Transverse colon (tissue), 4 donors: ENCODE measurements at regions of chr5 and their contacts with region 1.

Region 1: GRCh38 chr5:180090098-180090768 is 18.7 kb upstream of the RNF130 start:
- DNase-seq: peak; percentile 70
- H3K4me3 ChIP-seq: peak overlapping the region; percentile 43 to 59 (median 53)
- H3K27ac ChIP-seq: peak overlapping the region; percentile 68 to 76 (median 74)
- H3K4me1 ChIP-seq: peaks cover 0 to 24% (median 15%) of the 10 kb centered on the region in 4 donors
- H3K27me3 ChIP-seq: no peaks in the 10 kb centered on the region
- CTCF ChIP-seq: peak; percentile 77 to 96 (median 86)
- EP300 ChIP-seq: no peak
- POLR2A ChIP-seq: peak; percentile 16

Region 2: DNA sequence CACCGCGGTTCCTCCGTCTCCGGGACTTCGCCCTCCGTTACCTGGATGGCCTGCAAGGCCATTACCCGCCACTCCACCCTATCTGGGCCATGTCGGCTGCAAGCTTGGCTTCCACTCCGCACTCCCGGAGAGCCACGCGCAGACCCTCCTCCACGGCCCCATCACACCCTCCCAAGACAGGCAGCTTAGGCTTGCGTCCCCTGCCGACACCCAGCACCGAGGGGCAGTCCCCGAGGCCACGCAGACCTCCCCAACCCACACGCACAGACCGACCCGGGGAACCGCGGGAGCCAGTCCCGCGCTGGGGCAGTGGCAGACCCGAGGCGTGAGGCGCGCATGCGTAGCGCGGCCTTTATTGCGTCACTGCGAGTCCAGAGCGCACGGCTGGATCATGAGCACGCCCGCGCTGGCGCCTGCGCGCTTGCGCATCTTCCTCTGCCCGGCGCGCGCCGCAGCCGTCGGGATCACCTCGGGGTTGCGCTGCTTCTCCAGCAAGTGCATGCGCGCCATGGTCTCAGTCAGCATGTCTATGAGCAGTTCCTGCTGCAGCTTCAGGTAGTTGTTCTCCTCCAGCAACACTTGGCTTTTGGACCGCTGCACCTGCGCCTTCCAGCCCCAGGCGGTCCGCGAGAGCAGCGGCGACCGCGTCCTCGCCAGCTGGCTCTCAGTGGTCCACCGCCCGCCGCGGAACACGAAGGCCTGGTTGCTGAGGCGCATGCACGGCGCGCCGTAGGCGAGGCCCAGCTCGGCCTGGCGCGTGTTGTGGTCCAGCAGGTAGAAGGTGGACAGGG is 411.8 kb before region 1 on chr5:
- in situ Hi-C with region 1: no loop called
- intact Hi-C with region 1: no loop called
- DNase-seq: peak; percentile 97
- H3K4me3 ChIP-seq: peak overlapping the region; percentile 57 to 78 (median 60)
- H3K27ac ChIP-seq: peak overlapping the region; percentile 85 to 98 (median 94)
- H3K4me1 ChIP-seq: peaks cover 5 to 26% (median 16%) of the 10 kb centered on the region in 4 donors
- H3K27me3 ChIP-seq: no peaks in the 10 kb centered on the region
- CTCF ChIP-seq: peak in 1 of 5 experiments; percentile 47
- EP300 ChIP-seq: no peak
- POLR2A ChIP-seq: peak; percentile 92

Region 3: GRCh38 chr5:179907570-179908324 is 182.5 kb before region 1 on chr5 and contains the start of gene TBC1D9B:
- in situ Hi-C with region 1: loop called in 1 of 4 experiments (anchors 25 kb)
- intact Hi-C with region 1: no loop called
- DNase-seq: peak; percentile 71
- H3K4me3 ChIP-seq: peak within 1 kb of the TSS; percentile 56 to 81 (median 66)
- H3K27ac ChIP-seq: peak within 1 kb of the TSS; percentile 82 to 88 (median 84)
- H3K4me1 ChIP-seq: peaks cover 14 to 23% (median 20%) of the 10 kb centered on the region in 4 donors
- H3K27me3 ChIP-seq: no peaks in the 10 kb centered on the region
- CTCF ChIP-seq: peak in 4 of 5 experiments; percentile 28 to 49 (median 35)
- EP300 ChIP-seq: no peak
- POLR2A ChIP-seq: no peak
- total RNA-seq, gene TBC1D9B: 90.5 to 178 (median 127) TPM

Region 4: GRCh38 chr5:179974946-179975712 is 115.1 kb before region 1 on chr5:
- in situ Hi-C with region 1: loop called in 1 of 4 experiments (anchors 25 kb)
- intact Hi-C with region 1: loop called (anchors 10 kb)
- DNase-seq: peak; percentile 59
- H3K4me3 ChIP-seq: no peak overlapping the region
- H3K27ac ChIP-seq: no peak overlapping the region
- H3K4me1 ChIP-seq: peaks cover 0 to 6% (median 1%) of the 10 kb centered on the region in 4 donors
- H3K27me3 ChIP-seq: no peaks in the 10 kb centered on the region
- CTCF ChIP-seq: peak; percentile 24 to 55 (median 32)
- EP300 ChIP-seq: no peak
- POLR2A ChIP-seq: no peak

Region 5: GRCh38 chr5:179986328-179986727 is 103.9 kb before region 1 on chr5:
- in situ Hi-C with region 1: loop called in 1 of 4 experiments (anchors 25 kb)
- intact Hi-C with region 1: loop called (anchors 10 kb)
- DNase-seq: no peak
- H3K4me3 ChIP-seq: no peak overlapping the region
- H3K27ac ChIP-seq: no peak overlapping the region
- H3K4me1 ChIP-seq: no peaks in the 10 kb centered on the region
- H3K27me3 ChIP-seq: no peaks in the 10 kb centered on the region
- CTCF ChIP-seq: no peak
- EP300 ChIP-seq: no peak
- POLR2A ChIP-seq: no peak

Region 6: GRCh38 chr5:180154821-180155364 is 64.7 kb after region 1 on chr5:
- in situ Hi-C with region 1: no loop called
- intact Hi-C with region 1: no loop called
- DNase-seq: peak; percentile 5
- H3K4me3 ChIP-seq: no peak overlapping the region
- H3K27ac ChIP-seq: no peak overlapping the region
- H3K4me1 ChIP-seq: no peaks in the 10 kb centered on the region
- H3K27me3 ChIP-seq: no peaks in the 10 kb centered on the region
- CTCF ChIP-seq: no peak
- EP300 ChIP-seq: no peak
- POLR2A ChIP-seq: no peak